MCF 10A (cell line): ENCODE measurements at regions of chr7 and their contacts with region 1.

Region 1: GRCh38 chr7:134355927-134356326 is 39.2 kb upstream of the SLC35B4 start:
- DNase-seq: peak; percentile 89
- H3K4me3 Mint-ChIP-seq: peak overlapping the region; percentile 38
- H3K27ac Mint-ChIP-seq: peak overlapping the region; percentile 96
- H3K4me1 Mint-ChIP-seq: peaks cover 10% of the 10 kb centered on the region
- H3K27me3 Mint-ChIP-seq: no peaks in the 10 kb centered on the region
- CTCF ChIP-seq: no peak

Region 2: GRCh38 chr7:134374291-134374690 is 18.4 kb after region 1 on chr7:
- CTCF ChIA-PET with region 1: interaction called, 11 read pairs
- POLR2A ChIA-PET with region 1: no interaction called
- intact Hi-C with region 1: no loop called
- DNase-seq: no peak
- H3K4me3 Mint-ChIP-seq: no peak overlapping the region
- H3K27ac Mint-ChIP-seq: no peak overlapping the region
- H3K4me1 Mint-ChIP-seq: peaks cover 18% of the 10 kb centered on the region
- H3K27me3 Mint-ChIP-seq: no peaks in the 10 kb centered on the region
- CTCF ChIP-seq: no peak

Region 3: GRCh38 chr7:135224027-135224426 is 868.1 kb after region 1 on chr7:
- CTCF ChIA-PET with region 1: no interaction called
- POLR2A ChIA-PET with region 1: no interaction called
- intact Hi-C with region 1: no loop called
- DNase-seq: no peak
- H3K4me3 Mint-ChIP-seq: no peak overlapping the region
- H3K27ac Mint-ChIP-seq: no peak overlapping the region
- H3K4me1 Mint-ChIP-seq: no peaks in the 10 kb centered on the region
- H3K27me3 Mint-ChIP-seq: peaks cover 18% of the 10 kb centered on the region
- CTCF ChIP-seq: no peak